Calu3 (cell line): ENCODE measurements at regions of chr3 and their contacts with region 1.

Region 1: DNA sequence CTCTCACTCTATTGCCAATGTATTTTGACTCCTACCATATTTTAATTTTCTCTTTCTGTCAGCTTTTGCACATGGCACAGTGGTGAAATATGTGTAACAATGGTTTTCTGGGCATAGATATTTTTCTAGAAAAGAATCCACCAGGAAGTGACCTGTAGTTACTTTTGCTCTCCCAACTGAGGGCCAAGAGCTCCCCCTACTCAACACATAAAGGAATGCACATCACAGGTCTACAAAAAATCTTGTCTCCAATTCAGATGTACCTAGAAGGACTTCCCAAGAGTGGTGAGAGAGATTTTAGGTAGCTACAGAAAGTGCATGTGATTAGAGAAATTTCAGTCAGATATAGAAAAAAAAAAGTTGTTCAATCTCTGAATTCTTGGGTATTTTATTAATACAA is 15.6 kb downstream of the CPA3 start:
- DNase-seq: peak; percentile 46
- H3K4me3 Mint-ChIP-seq: no peak overlapping the region
- H3K27ac Mint-ChIP-seq: no peak overlapping the region
- H3K4me1 Mint-ChIP-seq: no peaks in the 10 kb centered on the region
- H3K27me3 Mint-ChIP-seq: no peaks in the 10 kb centered on the region
- CTCF ChIP-seq: peak; percentile 63

Region 2: DNA sequence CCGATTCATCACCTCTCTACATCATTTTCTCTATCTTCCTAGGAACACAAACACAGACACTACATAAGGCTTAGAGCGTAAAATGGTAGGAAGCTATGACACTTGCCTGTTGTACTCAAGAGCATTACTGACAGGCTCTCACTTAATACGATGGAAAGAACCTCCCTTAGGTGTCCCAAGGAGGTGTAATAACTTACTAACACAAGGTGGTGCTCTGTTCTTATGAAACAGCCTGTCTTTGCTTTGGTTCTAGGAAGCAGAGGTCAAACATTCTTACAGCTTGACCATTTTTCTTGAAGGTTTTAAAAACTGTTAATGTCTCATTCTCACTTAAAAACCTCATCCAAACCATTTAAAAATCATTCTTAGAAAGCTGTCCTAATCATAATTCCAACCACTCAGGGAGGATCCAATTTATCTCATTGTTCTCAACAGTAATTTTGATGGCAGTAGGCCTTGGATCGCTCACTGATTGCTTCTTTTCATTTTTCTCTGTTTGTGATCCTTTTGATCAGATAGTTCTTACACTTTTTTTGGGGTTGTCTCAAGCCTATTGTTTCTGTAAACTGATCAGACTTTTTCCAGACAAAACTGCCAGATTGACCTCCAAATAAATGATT is 500.8 kb before region 1 on chr3:
- CTCF ChIA-PET with region 1: no interaction called
- intact Hi-C with region 1: loop called (anchors 2 kb)
- DNase-seq: peak; percentile 55
- H3K4me3 Mint-ChIP-seq: no peak overlapping the region
- H3K27ac Mint-ChIP-seq: no peak overlapping the region
- H3K4me1 Mint-ChIP-seq: no peaks in the 10 kb centered on the region
- H3K27me3 Mint-ChIP-seq: no peaks in the 10 kb centered on the region
- CTCF ChIP-seq: peak; percentile 39

Region 3: DNA sequence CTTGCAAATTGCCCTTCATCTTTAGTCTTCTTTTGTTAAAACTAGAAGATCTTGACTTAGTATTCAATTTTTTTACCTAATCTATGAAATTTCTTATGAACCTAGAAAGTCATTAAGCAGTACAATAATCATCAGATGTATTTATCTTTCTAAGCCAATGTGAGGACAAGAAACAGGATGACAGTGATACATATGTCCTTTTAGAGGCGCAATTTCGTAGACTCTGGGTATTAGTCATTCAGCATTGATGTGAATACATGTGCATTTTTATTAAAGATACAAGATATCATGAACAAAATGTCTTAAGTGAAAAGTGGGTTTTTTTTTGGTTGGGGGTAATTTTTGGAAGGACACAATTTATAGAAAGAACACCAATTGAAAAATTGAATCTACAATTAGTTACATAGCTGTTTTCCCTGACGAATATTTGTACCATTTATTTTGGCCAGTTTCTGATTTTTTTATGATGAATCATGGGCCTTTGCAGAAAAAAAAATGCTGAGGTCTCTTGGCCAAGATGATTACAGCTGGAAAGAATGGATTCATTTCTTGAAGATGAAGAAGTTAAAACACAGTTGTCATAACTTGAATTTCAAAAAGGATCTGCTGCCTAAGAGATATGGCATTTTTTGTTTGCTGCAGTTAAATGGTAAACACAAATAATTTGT is 231.9 kb before region 1 on chr3:
- CTCF ChIA-PET with region 1: no interaction called
- intact Hi-C with region 1: loop called (anchors 5 kb)
- DNase-seq: no peak
- H3K4me3 Mint-ChIP-seq: no peak overlapping the region
- H3K27ac Mint-ChIP-seq: no peak overlapping the region
- H3K4me1 Mint-ChIP-seq: no peaks in the 10 kb centered on the region
- H3K27me3 Mint-ChIP-seq: no peaks in the 10 kb centered on the region
- CTCF ChIP-seq: no peak

Region 4: DNA sequence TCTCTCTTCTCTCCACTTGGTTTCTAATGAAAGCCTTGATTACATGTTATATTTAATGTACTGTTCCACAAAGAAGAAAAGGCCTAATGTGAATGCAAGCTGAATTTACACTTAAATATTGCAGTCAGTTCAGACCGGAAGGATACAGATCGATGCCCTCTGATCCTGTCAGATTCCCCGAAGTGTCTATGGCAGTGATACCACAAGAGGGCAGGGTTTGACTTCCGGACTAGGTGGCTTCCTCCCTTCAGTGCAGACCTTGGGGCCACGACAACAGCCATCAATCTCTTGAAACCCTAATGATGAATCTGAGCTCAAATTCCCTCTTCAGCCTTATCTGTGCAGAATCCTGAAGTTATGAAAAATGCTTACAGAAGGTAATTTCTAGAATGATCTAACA is 153.4 kb before region 1 on chr3:
- CTCF ChIA-PET with region 1: interaction called, 5 read pairs
- intact Hi-C with region 1: loop called (anchors 1 kb)
- DNase-seq: peak; percentile 76
- H3K4me3 Mint-ChIP-seq: no peak overlapping the region
- H3K27ac Mint-ChIP-seq: no peak overlapping the region
- H3K4me1 Mint-ChIP-seq: peaks cover 8% of the 10 kb centered on the region
- H3K27me3 Mint-ChIP-seq: no peaks in the 10 kb centered on the region
- CTCF ChIP-seq: peak; percentile 71

Region 5: DNA sequence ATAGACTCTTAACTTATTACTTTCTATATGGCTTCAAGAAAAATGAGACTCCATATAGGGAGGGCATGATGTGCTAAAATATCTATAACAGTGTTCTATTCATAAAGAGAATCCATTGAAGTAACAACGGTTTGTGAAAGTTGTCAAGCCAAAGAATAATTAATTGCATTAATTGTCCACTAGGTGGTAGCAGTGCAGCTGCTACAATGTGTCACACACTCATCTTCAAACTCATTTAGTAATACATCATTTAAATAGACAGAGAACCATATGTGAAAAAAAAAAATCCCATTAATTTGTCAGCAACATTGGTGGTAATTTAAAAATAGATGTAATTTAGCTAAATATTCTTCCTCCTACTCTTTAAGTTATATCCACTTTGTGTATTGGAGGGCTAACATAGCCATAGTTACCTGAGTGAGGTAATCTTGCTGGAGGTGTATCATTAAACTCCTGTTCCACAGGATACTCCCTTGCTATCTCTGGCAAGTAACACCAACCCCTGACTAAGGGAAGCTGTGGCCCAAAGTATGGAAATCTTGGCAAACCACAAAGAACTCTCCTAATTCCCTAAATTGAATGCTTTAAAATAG is 19.3 kb before region 1 on chr3:
- CTCF ChIA-PET with region 1: interaction called, 8 read pairs
- intact Hi-C with region 1: loop called (anchors 2 kb)
- DNase-seq: no peak
- H3K4me3 Mint-ChIP-seq: no peak overlapping the region
- H3K27ac Mint-ChIP-seq: no peak overlapping the region
- H3K4me1 Mint-ChIP-seq: no peaks in the 10 kb centered on the region
- H3K27me3 Mint-ChIP-seq: peaks cover under 1% of the 10 kb centered on the region
- CTCF ChIP-seq: peak; percentile 82

Region 6: DNA sequence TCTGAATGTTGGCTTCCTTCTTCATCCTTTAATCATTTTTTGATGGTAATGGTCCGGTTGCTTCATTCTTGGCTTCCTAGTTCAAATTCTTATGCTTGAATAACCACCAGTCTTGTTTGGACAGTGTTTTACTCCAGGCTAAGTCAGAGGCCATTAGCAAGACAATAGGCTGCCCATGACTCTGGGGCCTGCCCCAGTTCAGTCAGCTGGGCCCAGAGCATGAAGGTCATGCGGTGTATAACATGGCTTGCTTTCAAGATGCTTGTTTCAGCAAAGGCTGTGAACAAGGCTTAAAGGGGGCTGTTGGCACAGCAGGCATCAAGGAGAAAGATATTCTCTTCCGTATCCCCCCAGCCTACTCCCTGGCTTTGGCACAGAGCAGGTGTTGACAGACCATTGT is 439.1 kb after region 1 on chr3:
- CTCF ChIA-PET with region 1: no interaction called
- intact Hi-C with region 1: no loop called
- DNase-seq: no peak
- H3K4me3 Mint-ChIP-seq: no peak overlapping the region
- H3K27ac Mint-ChIP-seq: no peak overlapping the region
- H3K4me1 Mint-ChIP-seq: peaks cover 26% of the 10 kb centered on the region
- H3K27me3 Mint-ChIP-seq: no peaks in the 10 kb centered on the region
- CTCF ChIP-seq: no peak